Transverse colon (tissue), 4 donors: ENCODE measurements at regions of chr13 and their contacts with region 1.

Region 1: DNA sequence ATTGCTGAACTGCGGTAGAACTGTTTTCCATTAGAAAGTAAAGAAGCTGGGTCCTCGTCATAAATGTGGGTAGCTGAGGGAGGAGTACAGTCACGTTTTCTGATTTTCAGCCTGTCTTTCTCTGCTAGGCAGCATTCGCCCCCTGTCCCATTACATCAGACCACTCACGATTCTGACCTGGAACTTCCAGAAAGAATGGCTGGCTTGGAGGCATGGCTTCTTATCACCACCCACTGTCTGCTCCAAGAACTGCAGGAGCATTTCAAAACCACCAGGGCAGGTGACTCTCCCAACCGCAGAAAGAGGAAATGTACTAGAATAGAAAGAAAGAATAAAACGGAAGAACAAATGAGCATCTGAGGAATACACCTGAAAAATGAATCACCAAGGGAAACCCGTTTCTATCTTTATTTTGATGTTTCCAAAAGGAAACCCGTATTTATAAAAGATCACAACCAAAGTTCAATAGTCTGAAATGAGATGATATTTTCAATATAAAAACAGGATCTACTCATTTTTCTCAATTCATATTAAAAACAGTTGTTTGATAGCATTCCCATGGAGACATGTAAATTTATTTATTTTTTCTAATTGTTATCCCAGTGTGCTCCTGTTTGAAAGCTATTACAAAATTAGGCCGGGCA is 22.1 kb upstream of the POMP start:
- DNase-seq: peak; percentile 65
- H3K4me3 ChIP-seq: no peak overlapping the region
- H3K27ac ChIP-seq: no peak overlapping the region
- H3K4me1 ChIP-seq: peaks cover 0 to 8% (median 3%) of the 10 kb centered on the region in 4 donors
- H3K27me3 ChIP-seq: no peaks in the 10 kb centered on the region
- CTCF ChIP-seq: peak; percentile 70 to 81 (median 76)
- EP300 ChIP-seq: no peak
- POLR2A ChIP-seq: no peak

Region 2: GRCh38 chr13:28324181-28324789 is 312.5 kb before region 1 on chr13:
- in situ Hi-C with region 1: loop called (anchors 5 to 25 kb)
- intact Hi-C with region 1: loop called (anchors 10 kb)
- DNase-seq: peak; percentile 55
- H3K4me3 ChIP-seq: no peak overlapping the region
- H3K27ac ChIP-seq: no peak overlapping the region
- H3K4me1 ChIP-seq: no peaks in the 10 kb centered on the region
- H3K27me3 ChIP-seq: no peaks in the 10 kb centered on the region
- CTCF ChIP-seq: peak; percentile 63 to 70 (median 67)
- EP300 ChIP-seq: no peak
- POLR2A ChIP-seq: no peak

Region 3: DNA sequence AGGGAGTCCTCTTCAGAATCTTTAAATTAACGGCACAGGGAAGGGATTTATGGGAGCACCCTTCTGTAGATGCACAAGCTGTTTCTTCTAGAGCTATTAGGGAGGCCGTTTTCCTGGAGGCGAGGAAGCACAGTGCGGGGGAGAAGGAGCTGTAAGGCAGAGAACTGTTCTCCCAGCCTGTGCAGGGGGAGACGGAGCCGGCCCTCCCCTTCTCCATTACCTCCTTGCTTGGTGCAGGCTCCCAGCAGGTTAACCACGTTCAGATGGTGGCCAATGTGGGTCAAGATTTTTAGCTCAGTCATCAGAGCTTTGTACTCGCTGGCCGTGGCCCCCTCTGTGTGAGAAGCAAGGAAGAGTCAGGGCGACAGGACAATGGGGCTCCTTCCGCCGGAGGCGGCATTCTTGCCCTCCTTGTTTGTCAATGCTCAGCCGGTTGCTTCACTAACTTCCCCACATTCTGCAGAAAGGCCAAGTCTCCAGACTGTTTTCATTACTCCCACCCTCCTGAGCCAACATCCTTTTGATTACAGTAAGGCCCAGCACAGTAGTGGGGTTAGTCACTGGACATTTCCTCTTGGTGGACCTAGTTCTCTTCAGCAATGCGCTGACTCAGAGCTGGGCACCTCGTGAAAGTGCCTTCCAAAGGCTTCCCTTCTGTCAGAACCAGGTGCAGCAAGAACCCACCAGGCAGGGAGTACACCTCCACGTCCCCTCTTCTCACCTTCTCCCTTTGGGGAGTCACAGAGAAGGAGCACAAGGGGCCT is 307.2 kb before region 1 on chr13:
- in situ Hi-C with region 1: loop called (anchors 5 to 25 kb)
- intact Hi-C with region 1: loop called (anchors 10 kb)
- DNase-seq: no peak
- H3K4me3 ChIP-seq: no peak overlapping the region
- H3K27ac ChIP-seq: no peak overlapping the region
- H3K4me1 ChIP-seq: no peaks in the 10 kb centered on the region
- H3K27me3 ChIP-seq: no peaks in the 10 kb centered on the region
- CTCF ChIP-seq: no peak
- EP300 ChIP-seq: no peak
- POLR2A ChIP-seq: no peak

Region 4: GRCh38 chr13:28658796-28659620 is 22.2 kb after region 1 on chr13 and contains the start of gene POMP:
- in situ Hi-C with region 1: no loop called
- intact Hi-C with region 1: no loop called
- DNase-seq: peak; percentile 94
- H3K4me3 ChIP-seq: peak within 1 kb of the TSS; percentile 73 to 91 (median 81)
- H3K27ac ChIP-seq: peak within 1 kb of the TSS; percentile 88 to 93 (median 92)
- H3K4me1 ChIP-seq: peaks cover 22 to 45% (median 28%) of the 10 kb centered on the region in 4 donors
- H3K27me3 ChIP-seq: no peaks in the 10 kb centered on the region
- CTCF ChIP-seq: no peak
- EP300 ChIP-seq: peak; percentile 64
- POLR2A ChIP-seq: peak; percentile 96
- total RNA-seq, gene POMP: 24.7 to 56.8 (median 44.0) TPM

Region 5: GRCh38 chr13:28922341-28922740 is 285.5 kb after region 1 on chr13:
- in situ Hi-C with region 1: no loop called
- intact Hi-C with region 1: no loop called
- DNase-seq: no peak
- H3K4me3 ChIP-seq: no peak overlapping the region
- H3K27ac ChIP-seq: no peak overlapping the region
- H3K4me1 ChIP-seq: no peaks in the 10 kb centered on the region
- H3K27me3 ChIP-seq: no peaks in the 10 kb centered on the region
- CTCF ChIP-seq: no peak
- EP300 ChIP-seq: no peak
- POLR2A ChIP-seq: no peak